Cardiac septum (tissue), 1 donor: ENCODE measurements at regions of chr12 and their contacts with region 1.

Region 1: GRCh38 chr12:52870351-52871290 is 21.8 kb upstream of the KRT78 start:
- DNase-seq: no peak

Region 2: GRCh38 chr12:52147367-52147972 is 723.2 kb before region 1 on chr12:
- intact Hi-C with region 1: loop called (anchors 2 kb)
- DNase-seq: peak; percentile 95

Region 3: DNA sequence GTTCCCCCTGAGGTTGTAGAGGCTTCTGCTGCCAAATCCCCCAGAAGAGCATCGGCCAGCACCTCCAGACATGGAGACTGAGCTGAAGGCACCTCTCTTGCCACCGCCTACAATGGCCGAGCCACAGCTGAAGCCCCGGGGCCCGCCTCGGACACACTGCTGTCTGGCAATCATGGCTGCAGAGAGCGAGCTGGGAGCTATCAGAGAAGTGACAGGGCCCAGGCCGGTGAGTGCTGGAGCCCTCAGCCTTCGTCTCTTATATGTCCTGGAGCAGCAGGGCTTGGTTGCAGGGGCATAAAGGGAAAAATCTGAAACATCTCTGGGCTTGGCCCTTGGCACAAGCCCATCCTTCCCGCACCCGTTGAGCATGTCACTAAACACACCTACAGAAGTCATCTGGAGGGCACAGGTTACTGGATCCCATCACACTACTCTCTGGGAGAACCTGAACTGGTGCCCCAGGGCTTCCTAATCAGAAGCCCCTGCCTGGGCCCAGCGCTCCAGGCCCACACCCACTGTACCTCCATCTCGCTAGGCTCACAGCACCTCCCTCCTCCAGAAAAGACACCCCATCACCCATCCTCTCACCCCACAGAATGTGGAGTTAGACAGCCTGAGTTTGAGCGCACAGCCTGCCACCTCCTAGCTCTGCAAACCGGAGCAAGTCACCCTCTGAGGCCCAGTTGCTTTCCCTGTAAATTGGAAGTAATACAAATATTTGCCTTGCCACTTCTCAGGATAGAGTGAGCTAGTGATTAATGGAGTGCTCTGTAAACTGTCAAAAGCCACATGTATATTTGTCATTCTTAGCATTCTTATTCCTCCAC is 56.5 kb before region 1 on chr12 and contains the start of gene KRT4:
- intact Hi-C with region 1: no loop called
- DNase-seq: no peak
- total RNA-seq, gene KRT4: not detected